Activated CD4-positive, alpha-beta T cell treated with anti-CD3 and anti-CD28 coated beads, Interleukin-2, amount 10 ng/mL, durations not matched to agents 7 days and 5 days (primary cell): ENCODE measurements at regions of chr17 and their contacts with region 1.

Region 1: DNA sequence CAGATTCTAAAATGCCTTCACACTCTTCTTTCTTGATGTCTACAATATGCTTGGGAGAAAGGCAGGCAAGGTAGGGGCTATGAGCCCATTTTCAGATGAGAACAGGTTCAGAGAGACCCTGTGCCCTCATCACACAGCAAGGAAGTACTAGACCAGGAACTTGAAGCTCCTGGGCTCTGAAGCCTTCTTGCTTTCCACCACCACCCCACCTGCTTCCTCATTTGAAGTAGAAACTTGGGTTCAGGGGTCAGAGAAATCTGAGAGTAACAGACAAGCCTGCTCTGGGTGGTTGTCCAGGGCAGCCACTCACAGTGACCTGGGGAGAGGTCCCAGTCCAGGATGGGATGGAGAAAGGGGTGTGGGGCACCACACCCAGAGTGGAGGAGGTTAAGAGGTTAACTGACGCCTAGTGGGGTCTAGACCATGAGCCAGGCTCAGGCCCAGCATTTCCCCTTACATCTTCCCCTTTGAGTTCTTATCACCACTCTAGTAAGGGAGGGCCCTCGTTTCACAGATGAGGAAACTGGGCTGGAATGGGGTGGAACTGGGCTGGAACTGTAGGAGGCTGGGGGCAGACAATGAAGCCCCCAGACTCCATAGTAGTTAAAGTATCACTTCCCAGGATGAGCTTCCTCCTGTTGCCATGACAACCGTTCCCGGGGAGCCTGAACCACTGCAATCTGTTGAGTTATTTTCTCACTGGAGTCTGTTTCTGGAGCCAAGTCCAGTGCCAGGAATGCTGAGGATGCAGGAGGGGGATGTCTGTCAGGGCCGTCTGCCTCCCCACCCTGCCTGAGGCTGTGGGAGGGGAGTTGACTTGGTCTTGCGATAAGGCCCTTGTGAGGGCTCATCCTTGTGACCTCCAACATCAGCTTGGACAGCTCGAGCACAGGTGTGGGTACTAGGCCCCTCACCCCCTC is 16.2 kb upstream of the PHF12 start:
- DNase-seq: no peak
- H3K4me3 Mint-ChIP-seq: no peak overlapping the region
- H3K27ac Mint-ChIP-seq: peak overlapping the region; percentile 26
- H3K4me1 Mint-ChIP-seq: no peaks in the 10 kb centered on the region
- H3K27me3 Mint-ChIP-seq: peaks cover 9% of the 10 kb centered on the region

Region 2: GRCh38 chr17:28951991-28952975 is 15.2 kb before region 1 on chr17:
- CTCF ChIA-PET with region 1: interaction called, 33 read pairs
- POLR2A ChIA-PET with region 1: no interaction called
- DNase-seq: peak; percentile 98
- H3K4me3 Mint-ChIP-seq: no peak overlapping the region
- H3K27ac Mint-ChIP-seq: no peak overlapping the region
- H3K4me1 Mint-ChIP-seq: peaks cover 15% of the 10 kb centered on the region
- H3K27me3 Mint-ChIP-seq: no peaks in the 10 kb centered on the region

Region 3: DNA sequence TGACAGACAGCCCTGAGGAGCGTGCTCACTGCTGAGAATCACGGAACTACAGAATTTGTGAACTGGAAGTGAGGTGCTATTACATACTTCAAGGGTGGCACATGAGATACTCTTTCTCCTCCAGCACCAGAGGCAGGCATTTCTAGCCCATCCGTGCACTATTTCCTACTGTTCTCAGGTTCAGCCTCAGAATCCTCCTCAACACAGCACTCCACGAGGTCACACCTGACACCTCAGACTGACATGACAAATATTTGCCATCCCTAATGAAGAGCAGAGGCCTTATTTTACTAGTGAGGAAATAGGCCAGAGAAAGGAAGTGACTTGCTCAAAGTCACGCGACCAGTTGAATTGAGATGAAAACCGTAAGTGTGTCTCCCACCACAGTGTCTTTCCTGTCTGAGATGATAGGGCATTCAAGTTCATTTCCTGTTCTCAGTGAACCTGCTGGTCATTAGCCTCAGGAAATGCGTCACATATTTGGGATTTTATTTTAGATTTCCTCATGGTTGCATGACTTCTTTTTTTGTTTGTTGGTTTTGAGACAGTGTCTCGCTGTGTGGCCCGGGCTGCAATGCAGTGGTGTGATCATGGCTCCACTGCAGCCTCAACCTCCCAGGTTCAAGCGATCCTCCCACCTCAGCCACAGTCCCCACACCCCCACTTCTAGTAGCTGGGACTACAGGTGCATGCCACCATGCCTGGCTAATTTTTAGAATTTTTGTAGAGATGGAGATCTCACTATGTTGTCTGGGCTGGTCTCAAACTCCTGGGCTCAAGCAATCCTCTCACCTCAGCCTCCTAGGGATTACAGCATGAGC is 14.9 kb after region 1 on chr17:
- CTCF ChIA-PET with region 1: interaction called, 10 read pairs
- POLR2A ChIA-PET with region 1: interaction called, 3 read pairs
- DNase-seq: peak; percentile 60
- H3K4me3 Mint-ChIP-seq: no peak overlapping the region
- H3K27ac Mint-ChIP-seq: peak overlapping the region; percentile 86
- H3K4me1 Mint-ChIP-seq: peaks cover 24% of the 10 kb centered on the region
- H3K27me3 Mint-ChIP-seq: no peaks in the 10 kb centered on the region

Region 4: GRCh38 chr17:29111816-29112499 is 144.5 kb after region 1 on chr17:
- CTCF ChIA-PET with region 1: interaction called, 33 read pairs
- POLR2A ChIA-PET with region 1: no interaction called
- DNase-seq: peak; percentile 72
- H3K4me3 Mint-ChIP-seq: no peak overlapping the region
- H3K27ac Mint-ChIP-seq: no peak overlapping the region
- H3K4me1 Mint-ChIP-seq: peaks cover 2% of the 10 kb centered on the region
- H3K27me3 Mint-ChIP-seq: no peaks in the 10 kb centered on the region